RWPE1 (cell line): ENCODE measurements at regions of chr2 and their contacts with region 1.

Region 1: GRCh38 chr2:98598779-98599428 is 9.4 kb downstream of the COA5 start:
- DNase-seq: no peak
- H3K27ac ChIP-seq: no peak overlapping the region
- CTCF ChIP-seq: no peak

Region 2: DNA sequence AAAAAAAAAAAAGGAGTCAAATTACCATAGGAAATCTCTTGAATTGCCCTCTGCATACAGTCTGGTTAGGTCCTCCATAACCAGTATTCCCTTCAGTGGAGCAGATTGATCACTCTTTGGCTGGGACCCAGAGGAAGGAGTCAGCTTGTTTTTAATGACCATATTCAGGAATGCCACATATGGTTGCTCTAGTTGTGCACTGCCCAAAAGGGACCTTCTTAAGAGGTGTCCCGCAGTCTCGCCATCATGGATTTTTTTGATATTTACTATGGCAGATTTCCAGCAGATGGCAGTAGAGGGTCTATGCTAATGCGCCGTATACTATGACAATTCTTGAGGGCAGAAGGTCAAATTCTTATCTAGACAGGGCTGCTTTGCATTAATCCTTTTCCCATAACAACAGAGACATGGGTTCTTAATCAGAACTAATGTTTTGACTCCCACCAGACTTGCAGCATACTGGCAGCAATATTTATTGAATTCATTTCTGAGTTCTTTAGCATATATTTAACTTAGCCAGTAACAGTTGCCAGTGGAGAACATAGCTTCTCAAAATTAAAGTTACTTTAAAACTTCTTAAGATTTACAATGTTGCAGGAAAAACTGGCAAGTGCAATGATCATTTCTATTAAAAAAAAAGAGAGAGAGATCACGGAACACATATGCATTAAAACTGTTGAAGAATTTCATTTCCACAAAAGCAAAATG is 186.0 kb before region 1 on chr2:
- CTCF ChIA-PET with region 1: interaction called, 11 read pairs
- POLR2A ChIA-PET with region 1: no interaction called
- DNase-seq: peak; percentile 62
- H3K27ac ChIP-seq: no peak overlapping the region
- CTCF ChIP-seq: peak; percentile 74